Activated CD4-positive, alpha-beta T cell treated with anti-CD3 and anti-CD28 coated beads for 36 hours (primary cell): ENCODE measurements at regions of chr4 and their contacts with region 1.

Region 1: DNA sequence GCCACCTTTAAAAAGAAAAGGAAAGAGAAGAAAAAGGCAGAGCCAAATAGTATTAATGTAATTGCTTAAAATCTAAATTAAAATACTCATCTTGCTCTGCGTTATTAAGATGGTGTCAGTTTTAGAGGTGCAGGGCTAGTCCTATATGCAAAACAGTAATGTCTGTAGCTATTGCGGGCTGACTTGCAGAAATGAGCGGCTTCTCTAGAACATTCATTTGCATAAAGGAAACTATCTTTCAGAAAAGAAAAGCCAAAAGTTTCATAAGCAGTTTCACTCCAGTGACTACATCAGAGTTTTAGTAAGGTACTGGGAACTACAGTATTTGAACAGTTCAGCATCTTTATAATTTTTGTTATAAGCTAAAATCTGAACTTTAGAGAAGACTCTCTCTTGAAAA is 6.0 kb downstream of the SMAD1 start:
- DNase-seq: peak; percentile 62
- ATAC-seq: peak; percentile 93
- H3K4me3 Mint-ChIP-seq: no peak overlapping the region
- H3K27ac Mint-ChIP-seq: no peak overlapping the region
- H3K4me1 Mint-ChIP-seq: peaks cover 20% of the 10 kb centered on the region
- H3K27me3 Mint-ChIP-seq: peaks cover 5% of the 10 kb centered on the region

Region 2: DNA sequence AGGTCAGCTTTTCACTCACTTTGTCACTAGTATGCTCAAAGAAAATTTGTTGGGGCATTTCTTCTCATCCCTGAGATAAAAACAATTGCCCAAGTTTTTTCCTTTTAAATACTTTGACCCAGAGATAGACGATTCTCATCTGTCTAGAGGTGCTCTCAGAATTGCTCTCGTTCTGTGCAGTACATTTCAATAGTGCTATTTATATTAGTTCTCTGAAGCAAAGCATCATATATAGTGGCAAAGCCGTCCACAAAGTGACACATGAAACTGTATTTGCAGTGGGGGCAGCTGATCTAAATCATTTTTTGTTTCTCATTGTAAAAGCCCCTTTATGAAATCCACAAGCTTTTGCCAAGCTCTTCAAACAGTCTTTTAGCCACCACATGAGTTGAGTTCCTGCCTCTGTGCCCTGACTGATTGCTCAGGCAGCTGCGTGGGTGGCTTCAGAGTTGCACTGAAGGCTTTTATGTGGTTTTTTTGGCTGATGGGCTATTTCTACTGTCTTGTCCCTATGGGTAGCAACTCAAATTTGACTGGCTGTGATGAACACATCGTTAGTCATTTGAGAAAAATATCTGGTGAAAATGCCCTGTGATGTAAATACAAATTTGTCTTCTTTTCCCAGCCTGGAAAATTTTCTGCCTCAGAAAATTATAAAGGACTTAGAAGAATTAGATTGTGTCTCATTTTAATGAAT is 188.1 kb before region 1 on chr4:
- CTCF ChIA-PET with region 1: no interaction called
- POLR2A ChIA-PET with region 1: no interaction called
- intact Hi-C with region 1: loop called (anchors 1 to 2 kb)
- DNase-seq: peak; percentile 90
- ATAC-seq: peak; percentile 97
- H3K4me3 Mint-ChIP-seq: no peak overlapping the region
- H3K27ac Mint-ChIP-seq: no peak overlapping the region
- H3K4me1 Mint-ChIP-seq: peaks cover 20% of the 10 kb centered on the region
- H3K27me3 Mint-ChIP-seq: peaks cover 8% of the 10 kb centered on the region